ENCODE measurements at regions of chr12 and their contacts with region 1.

Region 1: DNA sequence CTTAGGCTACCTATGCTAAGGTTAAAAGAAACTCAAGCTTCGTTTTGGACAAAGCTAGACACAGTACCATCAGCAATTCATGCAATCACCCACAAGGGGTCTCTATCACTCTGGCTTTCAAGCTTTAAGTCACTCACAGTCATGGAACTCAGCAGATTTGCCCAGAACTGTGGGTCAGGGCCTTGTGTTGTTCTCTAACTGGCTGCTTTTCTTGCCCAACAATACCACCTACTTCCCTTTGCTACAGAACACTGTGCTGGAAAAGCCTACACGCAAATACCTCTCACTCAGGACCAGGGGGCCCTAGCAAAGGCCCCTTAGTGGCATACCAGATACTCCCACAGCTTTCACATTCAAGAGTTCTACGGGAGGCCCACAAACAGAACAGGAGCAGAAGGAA is 9.1 kb downstream of the NEMP1 start:
- DNase-seq: no peak
- ATAC-seq: peak; percentile 99
- H3K4me3 ChIP-seq: no peak overlapping the region
- H3K27ac ChIP-seq: peak overlapping the region; percentile 83
- H3K4me1 ChIP-seq: peaks cover 4% of the 10 kb centered on the region
- H3K27me3 ChIP-seq: no peaks in the 10 kb centered on the region
- CTCF ChIP-seq: peak; percentile 86

Region 2: GRCh38 chr12:57106021-57106708 is 36.6 kb after region 1 on chr12:
- intact Hi-C with region 1: loop called (anchors 5 kb)
- DNase-seq: no peak
- ATAC-seq: no peak
- H3K4me3 ChIP-seq: no peak overlapping the region
- H3K27ac ChIP-seq: no peak overlapping the region
- H3K4me1 ChIP-seq: peaks cover 24% of the 10 kb centered on the region
- H3K27me3 ChIP-seq: no peaks in the 10 kb centered on the region
- CTCF ChIP-seq: no peak

Region 3: GRCh38 chr12:57182921-57183790 is 113.6 kb after region 1 on chr12:
- intact Hi-C with region 1: loop called (anchors 10 kb)
- DNase-seq: peak; percentile 84
- ATAC-seq: peak; percentile 90
- H3K4me3 ChIP-seq: no peak overlapping the region
- H3K27ac ChIP-seq: no peak overlapping the region
- H3K4me1 ChIP-seq: no peaks in the 10 kb centered on the region
- H3K27me3 ChIP-seq: no peaks in the 10 kb centered on the region
- CTCF ChIP-seq: peak; percentile 84

Measured in upper lobe of right lung (tissue), 1 donor.